ENCODE measurements at regions of chr12 and their contacts with region 1.

Region 1: GRCh38 chr12:57124259-57124877 is 3.9 kb upstream of the LRP1 start:
- DNase-seq: peak; percentile 87
- ATAC-seq: peak; percentile 77
- H3K4me3 Mint-ChIP-seq: peak overlapping the region; percentile 1
- H3K27ac Mint-ChIP-seq: no peak overlapping the region
- H3K4me1 Mint-ChIP-seq: peaks cover 14% of the 10 kb centered on the region
- H3K27me3 Mint-ChIP-seq: peaks cover 9% of the 10 kb centered on the region

Region 2: DNA sequence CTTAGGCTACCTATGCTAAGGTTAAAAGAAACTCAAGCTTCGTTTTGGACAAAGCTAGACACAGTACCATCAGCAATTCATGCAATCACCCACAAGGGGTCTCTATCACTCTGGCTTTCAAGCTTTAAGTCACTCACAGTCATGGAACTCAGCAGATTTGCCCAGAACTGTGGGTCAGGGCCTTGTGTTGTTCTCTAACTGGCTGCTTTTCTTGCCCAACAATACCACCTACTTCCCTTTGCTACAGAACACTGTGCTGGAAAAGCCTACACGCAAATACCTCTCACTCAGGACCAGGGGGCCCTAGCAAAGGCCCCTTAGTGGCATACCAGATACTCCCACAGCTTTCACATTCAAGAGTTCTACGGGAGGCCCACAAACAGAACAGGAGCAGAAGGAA is 54.8 kb before region 1 on chr12:
- CTCF ChIA-PET with region 1: interaction called, 15 read pairs
- POLR2A ChIA-PET with region 1: no interaction called
- intact Hi-C with region 1: no loop called
- DNase-seq: peak; percentile 74
- ATAC-seq: peak; percentile 73
- H3K4me3 Mint-ChIP-seq: peak overlapping the region; percentile 39
- H3K27ac Mint-ChIP-seq: peak overlapping the region; percentile 89
- H3K4me1 Mint-ChIP-seq: peaks cover 74% of the 10 kb centered on the region
- H3K27me3 Mint-ChIP-seq: no peaks in the 10 kb centered on the region

Region 3: GRCh38 chr12:57101844-57102695 is 22.3 kb before region 1 on chr12:
- CTCF ChIA-PET with region 1: interaction called, 12 read pairs
- POLR2A ChIA-PET with region 1: interaction called, 3 read pairs
- intact Hi-C with region 1: no loop called
- DNase-seq: no peak
- ATAC-seq: no peak
- H3K4me3 Mint-ChIP-seq: no peak overlapping the region
- H3K27ac Mint-ChIP-seq: peak overlapping the region; percentile 58
- H3K4me1 Mint-ChIP-seq: peaks cover 46% of the 10 kb centered on the region
- H3K27me3 Mint-ChIP-seq: no peaks in the 10 kb centered on the region

Region 4: DNA sequence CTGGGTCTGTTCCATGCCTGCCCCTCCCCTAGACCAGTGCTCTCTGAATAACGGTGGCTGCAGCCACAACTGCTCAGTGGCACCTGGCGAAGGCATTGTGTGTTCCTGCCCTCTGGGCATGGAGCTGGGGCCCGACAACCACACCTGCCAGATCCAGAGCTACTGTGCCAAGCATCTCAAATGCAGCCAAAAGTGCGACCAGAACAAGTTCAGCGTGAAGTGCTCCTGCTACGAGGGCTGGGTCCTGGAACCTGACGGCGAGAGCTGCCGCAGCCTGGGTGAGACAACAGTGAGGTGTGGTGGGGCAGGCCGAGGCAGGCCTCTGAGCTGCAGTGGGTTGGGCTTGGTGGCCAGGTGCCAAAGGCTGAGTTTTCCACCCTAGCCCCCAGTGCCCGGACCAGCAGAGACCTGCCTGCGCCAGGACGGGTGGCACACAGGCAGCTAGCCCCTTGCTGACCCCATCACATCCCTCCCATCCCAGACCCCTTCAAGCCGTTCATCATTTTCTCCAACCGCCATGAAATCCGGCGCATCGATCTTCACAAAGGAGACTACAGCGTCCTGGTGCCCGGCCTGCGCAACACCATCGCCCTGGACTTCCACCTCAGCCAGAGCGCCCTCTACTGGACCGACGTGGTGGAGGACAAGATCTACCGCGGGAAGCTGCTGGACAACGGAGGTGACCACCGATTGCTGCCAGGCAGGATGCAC is 51.2 kb after region 1 on chr12:
- CTCF ChIA-PET with region 1: interaction called, 156 read pairs
- POLR2A ChIA-PET with region 1: no interaction called
- intact Hi-C with region 1: loop called (anchors 1 to 2 kb)
- DNase-seq: peak; percentile 81
- ATAC-seq: peak; percentile 59
- H3K4me3 Mint-ChIP-seq: no peak overlapping the region
- H3K27ac Mint-ChIP-seq: no peak overlapping the region
- H3K4me1 Mint-ChIP-seq: no peaks in the 10 kb centered on the region
- H3K27me3 Mint-ChIP-seq: no peaks in the 10 kb centered on the region

Region 5: GRCh38 chr12:57182921-57183790 is 58.8 kb after region 1 on chr12:
- CTCF ChIA-PET with region 1: interaction called, 156 read pairs
- POLR2A ChIA-PET with region 1: no interaction called
- intact Hi-C with region 1: loop called (anchors 1 kb)
- DNase-seq: peak; percentile 89
- ATAC-seq: peak; percentile 99
- H3K4me3 Mint-ChIP-seq: no peak overlapping the region
- H3K27ac Mint-ChIP-seq: no peak overlapping the region
- H3K4me1 Mint-ChIP-seq: peaks cover 2% of the 10 kb centered on the region
- H3K27me3 Mint-ChIP-seq: no peaks in the 10 kb centered on the region

Region 6: GRCh38 chr12:57229634-57230380 is 105.4 kb after region 1 on chr12 and contains the start of gene SHMT2:
- CTCF ChIA-PET with region 1: interaction called, 3 read pairs
- POLR2A ChIA-PET with region 1: no interaction called
- intact Hi-C with region 1: loop called in 1 of 2 experiments (anchors 5 kb)
- DNase-seq: peak; percentile 97
- ATAC-seq: peak; percentile 73
- H3K4me3 Mint-ChIP-seq: peak within 1 kb of the TSS; percentile 100
- H3K27ac Mint-ChIP-seq: peak within 1 kb of the TSS; percentile 99
- H3K4me1 Mint-ChIP-seq: peaks cover 65% of the 10 kb centered on the region
- H3K27me3 Mint-ChIP-seq: peaks cover 19% of the 10 kb centered on the region
- total RNA-seq, gene SHMT2: 436 to 487 TPM

Region 7: DNA sequence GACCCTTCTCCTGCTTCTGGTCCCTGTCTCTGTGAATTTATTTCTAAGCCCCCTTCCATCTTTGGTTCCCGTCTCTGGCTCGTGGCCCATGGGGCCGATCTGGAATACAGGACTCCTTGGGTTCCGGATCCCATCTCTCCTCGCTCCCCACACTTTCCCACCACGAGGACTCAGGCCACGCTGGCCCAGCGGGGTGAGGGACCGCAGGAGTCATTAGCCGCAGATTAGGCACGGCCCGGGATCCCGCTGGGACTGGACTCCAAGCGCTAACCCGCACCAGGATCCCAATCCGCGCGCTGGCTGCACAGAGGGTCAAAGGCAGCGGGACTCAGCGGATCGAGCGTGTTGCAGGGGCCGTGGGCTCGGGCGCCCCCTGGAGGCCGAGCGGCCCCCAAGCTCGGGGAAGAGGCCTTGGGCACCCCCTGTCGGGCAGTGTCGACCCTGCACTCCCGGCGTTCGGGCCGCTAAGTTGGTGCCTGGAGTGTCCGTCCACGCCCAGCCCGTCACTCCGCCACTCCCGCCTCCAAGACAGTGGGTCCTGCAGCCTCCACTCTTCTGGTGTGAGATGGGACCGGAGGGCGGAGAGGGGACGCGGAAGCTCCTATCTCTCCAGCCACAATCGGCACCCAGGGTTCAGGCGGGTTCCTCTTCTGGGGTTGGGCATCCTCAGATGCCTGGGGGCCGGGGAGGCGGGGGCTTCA is 114.6 kb after region 1 on chr12:
- CTCF ChIA-PET with region 1: interaction called, 6 read pairs
- POLR2A ChIA-PET with region 1: interaction called, 5 read pairs
- intact Hi-C with region 1: loop called in 1 of 2 experiments (anchors 2 kb)
- DNase-seq: peak; percentile 94
- ATAC-seq: peak; percentile 57
- H3K4me3 Mint-ChIP-seq: peak overlapping the region; percentile 83
- H3K27ac Mint-ChIP-seq: peak overlapping the region; percentile 80
- H3K4me1 Mint-ChIP-seq: peaks cover 70% of the 10 kb centered on the region
- H3K27me3 Mint-ChIP-seq: peaks cover 44% of the 10 kb centered on the region

Region 8: DNA sequence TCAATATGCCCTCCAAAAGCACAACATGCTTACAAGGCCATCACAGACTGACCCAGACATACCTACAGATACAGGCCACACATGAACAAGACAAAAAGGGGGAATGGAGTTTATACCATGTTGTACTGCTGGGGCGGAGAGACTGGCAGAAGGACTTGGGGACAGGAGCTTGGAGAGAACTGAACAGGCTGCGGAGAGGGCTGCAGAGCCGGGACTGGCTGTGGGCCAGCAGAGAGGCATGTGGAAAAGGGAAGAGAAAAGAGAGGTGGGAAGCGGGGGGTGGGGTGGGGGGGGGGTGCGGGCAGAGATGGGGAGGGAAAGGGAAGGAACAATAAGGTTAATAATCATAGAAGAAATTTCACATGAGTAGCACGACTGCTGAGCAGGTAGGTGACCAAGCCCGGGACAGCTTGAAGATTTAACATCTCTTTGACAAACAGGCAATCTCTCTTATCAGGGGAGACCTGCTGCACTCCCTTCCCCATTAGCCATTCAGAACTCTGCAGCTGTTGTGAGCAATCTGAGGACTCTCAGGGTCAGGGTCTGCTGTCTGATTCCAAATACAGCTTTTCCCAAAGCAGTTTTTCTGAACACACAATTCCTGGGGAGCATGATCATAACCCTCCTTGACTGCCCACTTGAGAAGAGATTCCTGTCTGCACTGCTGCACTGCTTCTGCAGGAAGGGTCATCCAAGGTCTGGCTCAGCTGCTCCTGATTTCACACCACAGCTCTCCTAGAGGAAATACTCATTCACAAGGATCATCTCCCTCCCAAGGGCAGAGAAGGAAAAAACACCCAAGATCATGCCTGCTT is 148.2 kb after region 1 on chr12:
- CTCF ChIA-PET with region 1: no interaction called
- POLR2A ChIA-PET with region 1: no interaction called
- intact Hi-C with region 1: no loop called
- DNase-seq: no peak
- ATAC-seq: no peak
- H3K4me3 Mint-ChIP-seq: no peak overlapping the region
- H3K27ac Mint-ChIP-seq: no peak overlapping the region
- H3K4me1 Mint-ChIP-seq: peaks cover 14% of the 10 kb centered on the region
- H3K27me3 Mint-ChIP-seq: no peaks in the 10 kb centered on the region

Region 9: GRCh38 chr12:57372233-57372632 is 247.9 kb after region 1 on chr12:
- CTCF ChIA-PET with region 1: no interaction called
- POLR2A ChIA-PET with region 1: no interaction called
- intact Hi-C with region 1: no loop called
- DNase-seq: no peak
- ATAC-seq: no peak
- H3K4me3 Mint-ChIP-seq: no peak overlapping the region
- H3K27ac Mint-ChIP-seq: no peak overlapping the region
- H3K4me1 Mint-ChIP-seq: peaks cover 6% of the 10 kb centered on the region
- H3K27me3 Mint-ChIP-seq: no peaks in the 10 kb centered on the region

Measured in activated CD4-positive, alpha-beta T cell treated with anti-CD3 and anti-CD28 coated beads for 36 hours (primary cell).